Psoas muscle (tissue), 8 donors: ENCODE measurements at regions of chr3 and their contacts with region 1.

Region 1: GRCh38 chr3:182713743-182714517 is 79.4 kb upstream of the ATP11B start:
- DNase-seq: no peak
- ATAC-seq: peak; percentile 70 to 92 (median 83)
- H3K4me3 ChIP-seq: no peak overlapping the region
- H3K27ac ChIP-seq: no peak overlapping the region
- H3K4me1 ChIP-seq: no peaks in the 10 kb centered on the region
- H3K27me3 ChIP-seq: no peaks in the 10 kb centered on the region
- CTCF ChIP-seq: peak; percentile 60

Region 2: GRCh38 chr3:182782149-182782548 is 68.2 kb after region 1 on chr3:
- intact Hi-C with region 1: loop called in 1 of 2 experiments (anchors 5 kb)
- DNase-seq: no peak
- ATAC-seq: no peak
- H3K4me3 ChIP-seq: no peak overlapping the region
- H3K27ac ChIP-seq: no peak overlapping the region
- H3K4me1 ChIP-seq: no peaks in the 10 kb centered on the region
- H3K27me3 ChIP-seq: peaks cover 0 to 3% (median 0%) of the 10 kb centered on the region in 3 donors
- CTCF ChIP-seq: no peak

Region 3: GRCh38 chr3:182792901-182793662 is 79.2 kb after region 1 on chr3 and contains the start of gene ATP11B:
- intact Hi-C with region 1: loop called in 1 of 2 experiments (anchors 5 kb)
- DNase-seq: peak; percentile 69 to 83
- ATAC-seq: peak; percentile 84 to 89 (median 88)
- H3K4me3 ChIP-seq: peak within 1 kb of the TSS; percentile 84
- H3K27ac ChIP-seq: peak within 1 kb of the TSS; percentile 95
- H3K4me1 ChIP-seq: peaks cover 23% of the 10 kb centered on the region
- H3K27me3 ChIP-seq: peaks cover 0 to 8% (median 0%) of the 10 kb centered on the region in 3 donors
- CTCF ChIP-seq: no peak
- total RNA-seq, gene ATP11B: 18.8 to 23.9 (median 20.8) TPM

Region 4: DNA sequence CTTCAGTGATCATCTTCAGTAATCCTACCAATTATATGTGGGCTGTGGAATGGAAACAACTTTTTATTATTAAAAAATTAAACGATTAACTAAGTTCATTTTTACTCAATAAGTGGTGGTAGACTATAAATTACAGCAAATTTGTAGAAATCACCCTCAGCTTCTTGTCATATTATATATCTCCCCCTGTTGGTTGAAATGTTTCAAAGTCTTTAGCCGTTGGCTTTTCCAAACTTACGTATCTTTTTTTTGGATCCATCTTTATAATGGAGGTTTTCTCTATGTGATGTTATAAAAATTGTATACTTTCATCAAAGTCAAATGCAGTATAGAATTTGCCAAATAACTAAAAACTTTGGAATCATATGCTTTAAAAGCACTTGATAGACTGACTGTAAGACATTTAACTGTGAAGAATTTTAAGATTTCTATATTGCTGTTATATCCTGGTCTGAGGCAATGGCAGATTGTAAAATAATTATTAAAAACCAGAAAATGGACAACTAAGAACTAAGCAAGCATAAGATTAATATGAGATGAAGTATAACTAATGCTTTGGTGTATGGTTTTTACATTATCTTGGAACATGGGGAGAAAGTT is 124.0 kb after region 1 on chr3:
- intact Hi-C with region 1: loop called (anchors 2 to 5 kb)
- DNase-seq: no peak
- ATAC-seq: peak in 1 of 4 donors; percentile 63
- H3K4me3 ChIP-seq: no peak overlapping the region
- H3K27ac ChIP-seq: no peak overlapping the region
- H3K4me1 ChIP-seq: no peaks in the 10 kb centered on the region
- H3K27me3 ChIP-seq: no peaks in the 10 kb centered on the region
- CTCF ChIP-seq: peak; percentile 56

Region 5: DNA sequence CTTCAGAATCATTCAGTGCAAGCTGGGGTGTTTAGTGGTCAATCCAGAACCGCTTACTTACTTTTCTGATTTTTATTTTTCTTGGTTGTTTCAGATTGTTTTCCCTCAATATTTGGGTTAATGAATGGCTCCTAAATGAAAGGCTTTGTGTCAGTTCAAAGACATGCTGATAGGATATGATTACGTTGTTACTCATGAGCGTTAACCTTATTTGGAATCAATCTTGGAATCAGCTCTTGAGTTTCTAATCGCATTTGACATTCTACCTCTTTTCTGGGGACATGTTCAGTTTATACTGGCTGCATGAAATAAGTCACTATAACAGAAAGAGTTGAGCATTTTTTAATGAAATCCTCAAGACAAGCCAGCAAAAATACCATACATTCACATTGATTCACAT is 129.5 kb after region 1 on chr3:
- intact Hi-C with region 1: loop called (anchors 2 to 5 kb)
- DNase-seq: no peak
- ATAC-seq: no peak
- H3K4me3 ChIP-seq: no peak overlapping the region
- H3K27ac ChIP-seq: no peak overlapping the region
- H3K4me1 ChIP-seq: no peaks in the 10 kb centered on the region
- H3K27me3 ChIP-seq: no peaks in the 10 kb centered on the region
- CTCF ChIP-seq: no peak